HEK293 (cell line): ENCODE measurements at regions of chr1 and their contacts with region 1.

Region 1: DNA sequence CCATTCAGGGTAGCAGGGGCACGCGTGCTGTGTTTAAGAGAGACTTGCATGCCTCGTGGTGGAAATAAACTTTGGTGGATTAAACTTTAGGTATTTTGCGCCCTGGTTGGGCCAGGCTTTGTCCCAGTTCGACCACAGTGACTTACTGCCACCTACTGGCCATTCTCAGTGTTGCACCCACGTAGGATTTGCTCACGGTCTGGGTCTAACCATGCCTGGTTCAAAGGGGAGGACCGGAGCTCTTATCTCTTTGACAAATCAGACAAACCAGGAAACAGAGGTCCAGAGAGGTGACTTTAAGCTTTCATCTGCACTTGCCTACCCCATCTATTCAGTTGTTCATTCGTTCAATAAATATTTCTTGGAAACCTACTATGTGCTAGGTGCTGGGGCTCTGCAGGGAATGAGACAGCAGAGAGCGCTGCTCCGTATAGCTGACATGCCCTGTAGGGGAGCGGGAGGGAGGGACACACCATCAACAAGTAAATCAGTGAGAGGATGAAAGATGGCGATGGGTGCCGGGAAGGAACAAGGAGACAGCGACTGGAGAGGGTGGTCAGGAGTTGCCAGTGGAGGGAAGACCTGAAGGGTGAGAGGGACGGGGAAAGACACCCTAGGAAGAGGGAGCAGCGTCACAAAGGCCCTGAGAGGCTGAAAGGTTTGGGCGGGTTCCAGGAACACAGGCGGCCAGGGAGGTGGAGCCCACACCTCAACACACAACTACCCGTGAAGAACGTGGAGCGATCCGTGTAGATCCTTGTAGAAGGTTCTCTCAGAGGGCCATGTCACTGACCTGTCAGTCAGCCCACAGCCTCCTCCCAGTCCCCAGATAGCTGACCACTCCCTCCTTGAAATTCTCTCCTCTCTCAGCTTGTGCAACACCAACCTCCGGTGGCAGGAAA is 27.2 kb upstream of the TINAGL1 start:
- H3K4me3 ChIP-seq: 0 out of 2 replicates have a peak overlapping the region, but pooled peaks have one; percentile 1
- H3K27ac ChIP-seq: no peak overlapping the region
- H3K4me1 ChIP-seq: no peaks in the 10 kb centered on the region
- CTCF ChIP-seq: peak; percentile 81

Region 2: DNA sequence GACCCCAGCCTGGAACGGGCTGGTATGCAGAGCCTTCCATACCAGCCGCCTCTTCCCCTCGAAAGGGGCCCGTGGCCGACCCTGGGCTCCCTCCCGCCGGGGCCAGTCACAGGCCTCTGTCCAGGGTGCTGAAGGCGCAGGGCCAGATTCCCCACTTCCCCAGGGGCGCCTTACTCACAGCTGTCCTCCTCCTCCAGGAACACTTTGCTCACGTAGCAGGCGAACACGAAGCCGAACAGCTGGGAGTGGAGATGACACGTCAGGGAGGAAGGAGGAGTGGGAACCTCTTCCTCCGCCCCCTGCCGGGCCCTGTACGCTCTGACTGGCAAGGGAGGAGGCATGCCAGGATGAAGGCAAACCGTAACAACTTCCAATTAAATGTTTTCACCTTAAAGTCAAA is 366.8 kb before region 1 on chr1:
- CTCF ChIA-PET with region 1: interaction called, 46 read pairs
- POLR2A ChIA-PET with region 1: no interaction called
- H3K4me3 ChIP-seq: no peak overlapping the region; the same call in 1 of the 2 replicates
- H3K27ac ChIP-seq: no peak overlapping the region
- H3K4me1 ChIP-seq: no peaks in the 10 kb centered on the region
- CTCF ChIP-seq: peak; percentile 69

Region 3: GRCh38 chr1:31422505-31423319 is 126.4 kb before region 1 on chr1:
- CTCF ChIA-PET with region 1: interaction called, 51 read pairs
- POLR2A ChIA-PET with region 1: interaction called, 3 read pairs
- H3K4me3 ChIP-seq: no peak overlapping the region
- H3K27ac ChIP-seq: no peak overlapping the region
- H3K4me1 ChIP-seq: no peaks in the 10 kb centered on the region
- CTCF ChIP-seq: peak; percentile 84

Region 4: DNA sequence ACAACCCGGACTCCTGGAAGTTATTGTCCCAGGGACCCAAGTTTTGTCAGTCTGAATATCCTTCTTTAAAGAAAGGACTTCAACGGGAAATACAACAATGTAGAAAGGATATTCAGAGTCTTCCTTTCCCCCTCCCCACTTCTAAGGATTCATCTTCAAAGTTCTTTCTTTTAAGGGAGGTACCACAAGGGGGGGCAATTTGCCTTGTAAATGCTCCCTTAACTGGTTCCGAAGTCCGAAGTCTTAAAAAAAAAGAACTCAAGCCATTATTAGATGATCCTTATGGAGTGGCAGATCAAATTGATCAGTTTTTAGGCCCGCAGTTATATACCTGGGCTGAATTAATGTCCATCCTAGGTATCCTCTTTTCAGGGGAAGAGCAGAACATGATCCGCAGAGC is 89.1 kb before region 1 on chr1:
- CTCF ChIA-PET with region 1: interaction called, 14 read pairs
- POLR2A ChIA-PET with region 1: no interaction called
- H3K4me3 ChIP-seq: no peak overlapping the region
- H3K27ac ChIP-seq: no peak overlapping the region
- H3K4me1 ChIP-seq: no peaks in the 10 kb centered on the region
- CTCF ChIP-seq: no peak

Region 5: DNA sequence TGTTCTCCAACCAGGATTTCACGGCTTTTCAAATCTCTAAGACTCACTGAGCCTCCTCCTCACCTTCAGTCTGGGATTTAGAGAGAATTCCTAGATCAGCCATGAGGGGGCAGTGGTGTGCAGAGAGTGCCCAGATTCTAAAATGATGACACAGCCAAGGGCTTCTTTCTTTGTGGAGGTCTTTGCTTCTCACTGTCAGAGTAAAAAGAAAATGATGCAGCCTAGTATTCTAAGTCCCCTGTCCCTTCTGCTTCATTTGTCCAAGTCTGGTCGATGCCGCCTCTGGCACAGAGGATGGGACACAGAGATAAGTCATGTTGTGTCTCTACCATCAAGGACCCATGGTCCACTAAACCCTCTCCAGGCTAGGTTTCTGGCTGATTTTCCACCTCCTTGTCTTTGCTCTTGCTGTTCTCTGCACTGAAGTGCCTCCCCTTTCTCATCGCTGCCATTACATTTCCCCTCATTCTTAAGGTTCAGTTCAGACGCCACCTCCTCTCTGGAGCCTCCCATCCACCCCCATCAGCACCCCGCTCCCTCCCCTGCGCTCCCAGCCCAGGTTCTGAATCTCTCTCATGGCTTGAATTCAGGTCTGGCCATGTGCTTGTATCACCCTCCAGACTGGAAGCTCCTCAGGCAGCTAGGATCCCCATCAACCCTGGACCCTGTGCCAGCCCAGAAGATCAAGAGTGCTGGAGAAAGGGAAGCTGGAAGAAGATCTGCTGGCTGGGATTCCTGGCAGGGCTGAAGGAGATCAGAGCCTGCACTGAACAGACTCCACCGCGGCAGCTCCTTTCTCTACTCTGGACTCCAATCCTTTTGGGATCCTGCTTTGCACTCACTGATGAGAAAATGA is 15.2 kb after region 1 on chr1:
- CTCF ChIA-PET with region 1: interaction called, 11 read pairs
- POLR2A ChIA-PET with region 1: no interaction called
- H3K4me3 ChIP-seq: no peak overlapping the region
- H3K27ac ChIP-seq: no peak overlapping the region
- H3K4me1 ChIP-seq: no peaks in the 10 kb centered on the region
- CTCF ChIP-seq: no peak

Region 6: DNA sequence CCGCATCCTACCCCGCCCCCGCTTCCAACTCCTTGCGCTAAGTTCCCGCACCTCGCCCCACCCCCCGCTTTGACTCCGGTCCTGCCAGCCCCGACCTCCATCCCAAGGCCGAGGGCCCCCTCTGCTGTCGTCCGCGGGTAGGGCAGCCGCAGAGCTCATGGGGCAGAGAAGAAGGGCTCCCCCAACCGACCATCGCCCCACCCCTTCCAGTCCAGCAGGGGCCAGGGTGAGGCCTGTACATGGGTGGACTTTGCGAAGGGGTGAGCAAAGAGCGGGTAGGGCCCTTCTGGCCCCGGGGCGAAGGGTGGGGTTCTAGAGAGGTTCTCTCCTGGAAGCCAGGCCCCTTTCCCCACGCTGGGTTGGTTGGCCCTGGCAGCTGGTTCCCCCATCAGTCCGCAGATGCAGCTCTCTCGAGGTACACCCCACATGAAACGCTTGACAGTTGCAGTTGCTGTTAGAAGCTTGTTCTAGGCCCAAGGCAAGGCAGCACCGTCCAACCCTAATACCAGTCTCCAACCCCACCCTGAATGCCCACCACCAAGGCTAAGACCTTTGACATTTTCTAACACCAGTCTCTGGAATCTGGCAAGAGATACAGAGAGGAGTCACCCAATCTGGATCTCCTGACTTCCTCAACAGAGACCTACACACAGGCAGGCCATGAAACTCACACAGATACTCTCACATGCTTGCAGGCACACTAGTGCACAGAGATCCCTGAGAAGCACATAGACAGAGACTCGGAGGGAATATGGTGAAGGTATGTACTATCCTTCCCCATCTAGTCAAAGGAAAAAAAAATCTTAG is 240.3 kb after region 1 on chr1:
- CTCF ChIA-PET with region 1: interaction called, 15 read pairs
- POLR2A ChIA-PET with region 1: no interaction called
- H3K4me3 ChIP-seq: peak overlapping the region; percentile 64
- H3K27ac ChIP-seq: no peak overlapping the region
- H3K4me1 ChIP-seq: no peaks in the 10 kb centered on the region
- CTCF ChIP-seq: peak; percentile 98